ENCODE measurements at regions of chr6 and their contacts with region 1.

Region 1: DNA sequence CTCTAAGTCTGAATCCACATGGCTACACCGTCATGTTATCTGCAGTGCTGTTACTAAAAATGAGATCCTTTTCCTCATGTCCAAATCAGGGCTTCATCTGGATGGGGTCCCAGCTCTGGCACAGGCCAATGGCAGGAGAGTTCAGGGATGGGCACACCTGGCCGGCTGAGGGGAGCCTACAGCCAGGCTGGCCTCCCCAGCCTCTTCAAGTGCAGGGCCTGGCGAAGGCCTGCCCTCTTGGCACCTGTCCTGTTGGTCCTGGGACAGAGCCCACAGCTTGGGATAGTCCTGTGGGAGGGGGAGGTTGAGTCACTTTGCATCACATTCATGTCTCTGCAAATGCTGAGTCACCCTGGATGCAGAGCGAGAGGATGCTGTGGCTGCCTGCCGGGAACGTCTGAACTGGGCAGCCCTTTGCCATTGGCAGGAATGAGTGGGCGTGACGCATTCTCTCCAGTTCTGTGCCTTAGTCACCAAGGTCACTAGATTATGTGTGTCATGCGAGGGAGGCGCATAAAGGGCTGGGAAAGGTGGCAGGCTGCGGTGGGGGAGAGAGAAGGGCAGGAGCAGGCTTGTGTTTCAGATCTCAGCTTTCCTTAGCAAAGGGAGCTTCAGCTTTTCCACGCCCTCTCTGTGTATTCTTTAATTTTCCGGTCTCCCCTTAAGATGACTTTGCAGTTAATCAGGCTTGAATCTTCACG is 223.2 kb upstream of the ECI2 start:
- DNase-seq: peak; percentile 98
- H3K4me3 ChIP-seq: peak overlapping the region; percentile 49; the same call in 1 of the 2 replicates
- H3K27ac ChIP-seq: peak overlapping the region; percentile 100
- H3K4me1 ChIP-seq: peaks cover 55% of the 10 kb centered on the region
- H3K27me3 ChIP-seq: no peaks in the 10 kb centered on the region
- CTCF ChIP-seq: no peak

Region 2: GRCh38 chr6:4253604-4254231 is 104.8 kb before region 1 on chr6:
- CTCF ChIA-PET with region 1: no interaction called
- POLR2A ChIA-PET with region 1: no interaction called
- intact Hi-C with region 1: no loop called
- DNase-seq: peak in 1 of 2 experiments; percentile 47
- H3K4me3 ChIP-seq: no peak overlapping the region
- H3K27ac ChIP-seq: no peak overlapping the region
- H3K4me1 ChIP-seq: no peaks in the 10 kb centered on the region
- H3K27me3 ChIP-seq: no peaks in the 10 kb centered on the region
- CTCF ChIP-seq: peak; percentile 27; the same call in 1 of the 2 replicates

Region 3: DNA sequence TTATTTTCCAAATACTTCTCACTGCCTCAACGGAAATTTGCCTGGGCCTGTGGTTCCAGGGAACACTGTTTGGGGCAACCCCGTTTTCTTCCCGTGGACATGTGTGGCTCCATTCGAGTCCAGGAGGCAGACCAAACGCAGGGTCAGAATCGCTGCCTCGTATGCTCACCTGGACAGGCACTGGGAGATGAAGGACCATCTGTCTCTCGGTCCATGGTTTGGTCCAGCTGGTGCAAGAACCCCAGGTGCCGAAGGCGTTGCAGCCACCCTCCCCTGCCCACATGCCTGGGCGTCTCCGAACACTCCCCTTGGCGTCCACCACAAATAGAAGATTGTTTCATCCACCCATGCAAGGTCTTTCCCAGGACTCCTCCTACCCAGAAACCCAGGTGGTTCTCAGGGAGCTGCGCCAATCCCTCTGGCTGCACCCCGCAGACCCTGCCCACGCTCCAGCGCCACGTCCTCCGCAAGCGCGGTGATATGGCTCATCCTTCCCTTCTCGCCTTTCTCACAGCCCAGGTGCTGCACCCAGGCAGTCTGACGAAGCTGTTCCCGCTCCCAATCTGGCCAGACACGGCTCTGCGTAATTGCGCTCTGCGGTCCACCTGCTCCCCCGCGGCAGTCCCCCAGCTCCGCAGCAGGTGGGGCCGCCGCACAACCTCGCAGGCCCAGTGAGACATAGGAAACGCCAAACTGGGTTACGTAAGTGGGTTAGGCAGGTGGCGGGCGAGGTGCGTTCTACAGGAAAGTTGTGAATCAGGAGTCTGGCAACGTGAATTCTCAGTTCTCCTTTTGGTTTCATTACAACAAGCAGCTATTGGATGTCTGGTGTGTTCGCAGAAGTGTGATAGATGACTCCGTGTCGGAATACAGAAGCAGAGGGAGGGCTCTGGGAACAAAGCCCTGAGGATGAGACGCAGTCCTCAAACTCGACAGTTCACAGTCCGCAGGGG is 76.9 kb before region 1 on chr6:
- CTCF ChIA-PET with region 1: no interaction called
- POLR2A ChIA-PET with region 1: interaction called, 23 read pairs
- intact Hi-C with region 1: loop called (anchors 1 kb)
- DNase-seq: peak; percentile 70 to 80
- H3K4me3 ChIP-seq: peak overlapping the region; percentile 54
- H3K27ac ChIP-seq: no peak overlapping the region
- H3K4me1 ChIP-seq: peaks cover 17% of the 10 kb centered on the region
- H3K27me3 ChIP-seq: no peaks in the 10 kb centered on the region
- CTCF ChIP-seq: peak; percentile 51

Region 4: GRCh38 chr6:4388675-4389074 is 30.1 kb after region 1 on chr6:
- CTCF ChIA-PET with region 1: no interaction called
- POLR2A ChIA-PET with region 1: no interaction called
- intact Hi-C with region 1: loop called (anchors 1 kb)
- DNase-seq: peak; percentile 83 to 90
- H3K4me3 ChIP-seq: no peak overlapping the region
- H3K27ac ChIP-seq: peak overlapping the region; percentile 37
- H3K4me1 ChIP-seq: peaks cover 14% of the 10 kb centered on the region
- H3K27me3 ChIP-seq: no peaks in the 10 kb centered on the region
- CTCF ChIP-seq: no peak

Region 5: DNA sequence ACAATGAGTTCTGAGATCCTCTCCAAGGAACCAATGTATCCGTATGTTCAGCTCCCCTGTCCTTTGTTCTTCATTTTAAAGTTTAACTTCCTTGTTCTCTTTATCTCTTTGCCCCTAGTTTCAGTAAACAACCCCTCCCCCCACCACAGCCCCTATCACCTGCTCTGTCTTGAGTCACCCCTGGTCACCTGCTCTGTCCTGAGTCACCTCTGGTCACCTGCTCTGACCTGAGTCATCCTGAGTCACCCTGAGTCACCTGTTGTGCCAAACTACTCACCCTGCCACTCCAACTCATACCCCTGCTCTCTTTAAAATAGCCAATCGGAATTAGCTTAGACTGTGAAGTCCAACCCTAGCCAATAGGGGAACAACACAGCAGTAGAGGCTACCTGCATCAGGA is 129.0 kb after region 1 on chr6:
- CTCF ChIA-PET with region 1: no interaction called
- POLR2A ChIA-PET with region 1: no interaction called
- intact Hi-C with region 1: loop called (anchors 2 kb)
- DNase-seq: peak; percentile 66
- H3K4me3 ChIP-seq: no peak overlapping the region
- H3K27ac ChIP-seq: peak overlapping the region; percentile 67
- H3K4me1 ChIP-seq: 0 out of 2 replicates have a peak, but pooled peaks cover 7% of the 10 kb centered on the region
- H3K27me3 ChIP-seq: no peaks in the 10 kb centered on the region
- CTCF ChIP-seq: no peak

Region 6: DNA sequence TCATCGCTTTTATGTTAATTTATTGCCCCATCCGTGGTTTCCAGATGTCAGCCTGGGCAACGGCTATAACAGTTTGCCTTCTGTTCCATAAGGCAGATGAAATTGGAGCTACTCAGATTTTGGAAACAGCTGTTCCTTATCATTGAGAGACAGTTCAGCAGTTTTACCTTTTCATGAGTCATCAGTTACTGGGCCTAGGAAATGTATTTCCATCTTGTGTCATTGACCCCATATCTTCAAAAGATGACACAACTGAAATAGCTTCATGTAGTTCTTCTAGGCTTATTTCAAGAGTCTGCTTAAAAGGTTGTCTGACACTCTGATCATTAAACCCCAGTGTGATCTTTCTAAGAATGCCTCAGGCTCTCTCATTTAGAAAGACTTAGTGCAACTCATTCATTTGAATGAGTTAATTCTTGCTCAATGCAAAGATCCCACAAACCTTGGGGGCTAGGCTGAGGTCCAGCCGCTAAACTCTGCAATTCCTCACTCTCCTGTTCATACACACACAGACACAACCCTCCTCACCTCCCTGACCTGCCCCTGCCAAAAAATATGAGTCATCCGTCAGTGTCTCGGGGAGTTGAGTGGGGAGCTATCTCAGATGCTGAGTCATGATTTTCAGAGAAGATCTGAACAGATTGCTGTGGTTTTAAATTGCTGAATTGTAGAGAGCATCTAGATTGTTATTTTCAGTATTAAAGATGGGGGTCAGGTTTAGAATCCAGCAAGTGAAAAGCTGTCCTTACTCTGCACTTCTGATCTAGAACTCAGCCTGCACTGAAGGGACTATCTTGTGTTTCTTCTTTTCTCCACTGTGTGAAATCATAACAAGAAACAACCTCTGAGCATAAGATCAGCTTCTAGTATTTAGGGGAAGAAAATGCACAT is 583.5 kb after region 1 on chr6:
- CTCF ChIA-PET with region 1: no interaction called
- POLR2A ChIA-PET with region 1: no interaction called
- intact Hi-C with region 1: loop called (anchors 2 kb)
- DNase-seq: peak; percentile 80 to 89
- H3K4me3 ChIP-seq: no peak overlapping the region
- H3K27ac ChIP-seq: peak overlapping the region; percentile 66
- H3K4me1 ChIP-seq: peaks cover 32% of the 10 kb centered on the region
- H3K27me3 ChIP-seq: no peaks in the 10 kb centered on the region
- CTCF ChIP-seq: no peak

Measured in PC-9 (cell line).